ENCODE measurements at regions of chr12 and their contacts with region 1.

Region 1: DNA sequence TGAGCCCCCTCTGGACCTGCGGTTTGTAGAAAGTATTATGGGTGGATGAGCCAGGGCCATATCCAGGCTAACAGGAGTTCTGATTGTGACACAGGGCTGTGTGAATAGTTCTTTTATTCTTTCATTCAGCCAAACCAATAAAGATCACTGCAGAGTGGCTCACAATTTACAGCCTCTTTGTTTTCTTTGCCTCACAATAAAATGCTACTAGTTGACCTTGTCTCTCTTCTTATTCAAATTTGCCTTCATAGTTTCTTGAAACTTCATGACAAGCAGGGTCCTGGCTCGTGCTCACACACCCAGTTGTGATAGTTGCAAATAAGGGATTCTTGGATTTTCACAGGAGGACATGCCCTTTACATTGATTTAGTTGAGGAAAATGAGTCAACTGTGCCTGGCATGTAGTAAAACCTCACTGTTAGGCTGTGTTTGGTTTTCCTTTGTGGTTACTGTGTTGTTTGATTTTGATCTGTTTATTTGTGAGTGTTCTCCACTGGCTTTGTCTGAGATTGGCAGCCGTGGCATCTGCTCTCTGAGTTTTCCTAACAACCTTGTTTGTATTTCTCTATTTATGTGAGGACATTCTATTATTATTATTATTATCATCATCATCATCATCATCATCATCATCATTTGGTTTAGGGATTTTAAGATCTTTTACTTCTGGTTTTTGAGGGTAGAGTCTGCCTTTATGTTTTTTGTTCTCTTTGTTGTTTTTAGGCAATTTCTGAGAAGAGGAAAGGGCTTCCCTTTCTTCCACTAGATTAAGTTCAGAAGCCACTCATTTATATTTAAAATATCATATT is 2.7 kb upstream of the KRT6B start:
- DNase-seq: no peak
- ATAC-seq: no peak
- H3K4me3 ChIP-seq: no peak overlapping the region
- H3K4me3 Mint-ChIP-seq: no peak overlapping the region
- H3K27ac ChIP-seq: no peak overlapping the region
- H3K27ac Mint-ChIP-seq: no peak overlapping the region
- H3K4me1 ChIP-seq: no peaks in the 10 kb centered on the region
- H3K4me1 Mint-ChIP-seq: no peaks in the 10 kb centered on the region
- H3K27me3 ChIP-seq: peaks cover 0 to 2% (median 0%) of the 10 kb centered on the region in 4 experiments
- H3K27me3 Mint-ChIP-seq: peaks cover 20% of the 10 kb centered on the region
- CTCF ChIP-seq: no peak

Region 2: GRCh38 chr12:52473768-52474167 is 19.2 kb after region 1 on chr12 and contains the start of gene KRT6C:
- CTCF ChIA-PET with region 1: no interaction called
- POLR2A ChIA-PET with region 1: no interaction called
- intact Hi-C with region 1: loop called (anchors 2 kb)
- DNase-seq: no peak
- ATAC-seq: no peak
- H3K4me3 ChIP-seq: no peak within 1 kb of the TSS
- H3K4me3 Mint-ChIP-seq: no peak within 1 kb of the TSS
- H3K27ac ChIP-seq: no peak within 1 kb of the TSS
- H3K27ac Mint-ChIP-seq: no peak within 1 kb of the TSS
- H3K4me1 ChIP-seq: no peaks in the 10 kb centered on the region
- H3K4me1 Mint-ChIP-seq: no peaks in the 10 kb centered on the region
- H3K27me3 ChIP-seq: no peaks in the 10 kb centered on the region
- H3K27me3 Mint-ChIP-seq: peaks cover 25% of the 10 kb centered on the region
- CTCF ChIP-seq: no peak
- total RNA-seq, gene KRT6C: not detected in 2 replicates